K562 (cell line): ENCODE measurements at regions of chr18 and their contacts with region 1.

Region 1: DNA sequence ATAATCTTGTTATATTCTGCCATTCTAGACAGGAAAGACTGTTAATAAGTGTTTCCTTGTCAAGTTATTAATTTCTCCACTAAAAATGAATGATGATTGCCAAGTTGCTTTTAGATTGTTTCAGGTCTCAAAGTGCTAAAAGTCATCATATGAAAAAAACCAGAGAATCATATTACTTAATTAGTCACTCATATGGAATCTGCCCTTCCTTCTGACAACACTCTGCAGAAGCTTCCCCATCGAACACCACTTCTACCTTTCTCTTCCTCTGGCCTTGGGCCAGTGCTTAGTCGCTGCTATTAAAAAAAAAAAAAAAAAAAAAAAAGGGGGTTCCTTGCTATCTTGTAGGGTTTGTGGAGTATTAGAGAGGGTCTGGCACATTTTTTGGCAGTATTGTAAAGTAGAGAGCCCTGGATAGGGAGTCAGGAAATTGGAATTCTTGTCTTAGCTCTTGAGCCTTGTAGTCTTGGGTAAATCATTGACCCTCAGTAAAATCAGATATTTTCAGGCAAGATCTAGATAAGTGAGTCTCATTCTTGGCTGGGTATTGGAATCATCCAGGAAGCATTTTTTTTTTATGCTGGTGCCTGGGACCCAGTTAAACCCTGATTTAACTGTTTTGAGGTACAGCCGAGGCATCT is 141.7 kb upstream of the CCDC68 start:
- DNase-seq: no peak
- ATAC-seq: no peak
- H3K4me3 ChIP-seq: no peak overlapping the region
- H3K27ac ChIP-seq: no peak overlapping the region
- H3K4me1 ChIP-seq: no peaks in the 10 kb centered on the region; a peak in 3 of 5 replicates
- H3K27me3 ChIP-seq: no peaks in the 10 kb centered on the region
- CTCF ChIP-seq: no peak
- EP300 ChIP-seq: no peak
- POLR2A ChIP-seq: no peak
- RAD21 ChIP-seq: no peak

Region 2: DNA sequence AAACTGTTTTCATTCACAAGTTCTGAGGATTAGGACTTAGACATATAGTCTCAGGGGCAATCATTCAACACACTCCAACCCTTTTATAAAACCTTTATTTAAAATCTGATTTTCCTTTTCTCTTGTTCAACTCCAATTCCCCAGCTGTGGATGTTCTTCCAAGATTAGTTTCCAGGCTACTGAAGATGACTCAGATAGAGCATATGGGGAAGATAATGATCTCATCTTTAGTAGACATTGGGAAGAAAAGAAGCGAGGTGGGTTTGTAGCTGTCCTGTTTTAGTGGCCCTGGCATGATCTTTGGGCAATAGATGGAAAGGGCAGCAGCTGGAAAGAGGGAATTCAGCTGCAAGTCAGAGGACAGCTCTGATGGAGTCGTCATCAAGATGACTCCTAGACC is 106.0 kb after region 1 on chr18:
- CTCF ChIA-PET with region 1: no interaction called
- POLR2A ChIA-PET with region 1: no interaction called
- in situ Hi-C with region 1: no loop called
- intact Hi-C with region 1: loop called (anchors 10 kb)
- DNase-seq: no peak
- ATAC-seq: no peak
- H3K4me3 ChIP-seq: no peak overlapping the region
- H3K27ac ChIP-seq: no peak overlapping the region
- H3K4me1 ChIP-seq: peaks cover 0 to 6% of the 10 kb centered on the region in 2 experiments; a peak in 2 of 5 replicates
- H3K27me3 ChIP-seq: no peaks in the 10 kb centered on the region
- CTCF ChIP-seq: no peak
- EP300 ChIP-seq: no peak
- POLR2A ChIP-seq: no peak
- RAD21 ChIP-seq: no peak